ENCODE measurements at regions of chr20 and their contacts with region 1.

Region 1: GRCh38 chr20:59831024-59831915 is 102.2 kb downstream of the SYCP2 start:
- DNase-seq: peak; percentile 65 to 88
- H3K4me3 ChIP-seq: no peak overlapping the region
- H3K4me3 Mint-ChIP-seq: no peak overlapping the region
- H3K27ac Mint-ChIP-seq: peak overlapping the region; percentile 4
- H3K4me1 ChIP-seq: 0 out of 2 replicates have a peak, but pooled peaks cover 7% of the 10 kb centered on the region
- H3K4me1 Mint-ChIP-seq: peaks cover 12% of the 10 kb centered on the region
- H3K27me3 ChIP-seq: no peaks in the 10 kb centered on the region
- H3K27me3 Mint-ChIP-seq: peaks cover 8% of the 10 kb centered on the region
- CTCF ChIP-seq: no peak

Region 2: GRCh38 chr20:59782986-59783640 is 48.2 kb before region 1 on chr20:
- CTCF ChIA-PET with region 1: interaction called, 4 read pairs
- POLR2A ChIA-PET with region 1: no interaction called
- intact Hi-C with region 1: loop called (anchors 5 kb)
- DNase-seq: peak; percentile 86 to 88
- H3K4me3 ChIP-seq: no peak overlapping the region
- H3K4me3 Mint-ChIP-seq: no peak overlapping the region
- H3K27ac Mint-ChIP-seq: no peak overlapping the region
- H3K4me1 ChIP-seq: 0 out of 2 replicates have a peak, but pooled peaks cover 3% of the 10 kb centered on the region
- H3K4me1 Mint-ChIP-seq: peaks cover 7% of the 10 kb centered on the region
- H3K27me3 ChIP-seq: no peaks in the 10 kb centered on the region
- H3K27me3 Mint-ChIP-seq: peaks cover 8% of the 10 kb centered on the region
- CTCF ChIP-seq: peak; percentile 99 to 100

Region 3: GRCh38 chr20:60071965-60072364 is 240.7 kb after region 1 on chr20:
- CTCF ChIA-PET with region 1: no interaction called
- POLR2A ChIA-PET with region 1: no interaction called
- intact Hi-C with region 1: no loop called
- DNase-seq: no peak
- H3K4me3 ChIP-seq: no peak overlapping the region
- H3K4me3 Mint-ChIP-seq: no peak overlapping the region
- H3K27ac Mint-ChIP-seq: no peak overlapping the region
- H3K4me1 ChIP-seq: no peaks in the 10 kb centered on the region
- H3K4me1 Mint-ChIP-seq: no peaks in the 10 kb centered on the region
- H3K27me3 ChIP-seq: peaks cover 7% of the 10 kb centered on the region
- H3K27me3 Mint-ChIP-seq: peaks cover 27% of the 10 kb centered on the region
- CTCF ChIP-seq: no peak

Measured in Caco-2 (cell line).